ENCODE measurements at regions of chr6 and their contacts with region 1.

Region 1: GRCh38 chr6:116405138-116405537 is 34.4 kb downstream of the DSE start:
- DNase-seq: no peak
- ATAC-seq: peak; percentile 56
- H3K4me3 Mint-ChIP-seq: peak overlapping the region; percentile 67
- H3K27ac Mint-ChIP-seq: peak overlapping the region; percentile 92
- H3K4me1 Mint-ChIP-seq: peaks cover 59% of the 10 kb centered on the region
- H3K27me3 Mint-ChIP-seq: no peaks in the 10 kb centered on the region
- CTCF ChIP-seq: no peak

Region 2: GRCh38 chr6:116010790-116011401 is 394.2 kb before region 1 on chr6:
- CTCF ChIA-PET with region 1: no interaction called
- POLR2A ChIA-PET with region 1: no interaction called
- intact Hi-C with region 1: loop called (anchors 10 kb)
- DNase-seq: peak; percentile 29
- ATAC-seq: peak; percentile 64
- H3K4me3 Mint-ChIP-seq: no peak overlapping the region
- H3K27ac Mint-ChIP-seq: no peak overlapping the region
- H3K4me1 Mint-ChIP-seq: peaks cover 32% of the 10 kb centered on the region
- H3K27me3 Mint-ChIP-seq: peaks cover 2% of the 10 kb centered on the region
- CTCF ChIP-seq: peak; percentile 45

Region 3: GRCh38 chr6:116387374-116387773 is 17.8 kb before region 1 on chr6:
- CTCF ChIA-PET with region 1: no interaction called
- POLR2A ChIA-PET with region 1: interaction called, 8 read pairs
- intact Hi-C with region 1: loop called (anchors 2 kb)
- DNase-seq: no peak
- ATAC-seq: peak; percentile 53
- H3K4me3 Mint-ChIP-seq: peak overlapping the region; percentile 67
- H3K27ac Mint-ChIP-seq: peak overlapping the region; percentile 72
- H3K4me1 Mint-ChIP-seq: peaks cover 60% of the 10 kb centered on the region
- H3K27me3 Mint-ChIP-seq: no peaks in the 10 kb centered on the region
- CTCF ChIP-seq: no peak

Region 4: GRCh38 chr6:116444092-116444491 is 39.0 kb after region 1 on chr6:
- CTCF ChIA-PET with region 1: interaction called, 5 read pairs
- POLR2A ChIA-PET with region 1: interaction called, 3 read pairs
- intact Hi-C with region 1: loop called (anchors 5 kb)
- DNase-seq: no peak
- ATAC-seq: peak; percentile 78
- H3K4me3 Mint-ChIP-seq: no peak overlapping the region
- H3K27ac Mint-ChIP-seq: no peak overlapping the region
- H3K4me1 Mint-ChIP-seq: peaks cover 26% of the 10 kb centered on the region
- H3K27me3 Mint-ChIP-seq: no peaks in the 10 kb centered on the region
- CTCF ChIP-seq: no peak

Region 5: GRCh38 chr6:116476002-116476678 is 71.0 kb after region 1 on chr6:
- CTCF ChIA-PET with region 1: no interaction called
- POLR2A ChIA-PET with region 1: no interaction called
- intact Hi-C with region 1: loop called (anchors 1 kb)
- DNase-seq: no peak
- ATAC-seq: peak; percentile 97
- H3K4me3 Mint-ChIP-seq: peak overlapping the region; percentile 70
- H3K27ac Mint-ChIP-seq: peak overlapping the region; percentile 93
- H3K4me1 Mint-ChIP-seq: peaks cover 34% of the 10 kb centered on the region
- H3K27me3 Mint-ChIP-seq: no peaks in the 10 kb centered on the region
- CTCF ChIP-seq: no peak

Region 6: GRCh38 chr6:116580198-116580597 is 175.1 kb after region 1 on chr6:
- CTCF ChIA-PET with region 1: no interaction called
- POLR2A ChIA-PET with region 1: no interaction called
- intact Hi-C with region 1: no loop called
- DNase-seq: no peak
- ATAC-seq: no peak
- H3K4me3 Mint-ChIP-seq: no peak overlapping the region
- H3K27ac Mint-ChIP-seq: no peak overlapping the region
- H3K4me1 Mint-ChIP-seq: peaks cover 2% of the 10 kb centered on the region
- H3K27me3 Mint-ChIP-seq: no peaks in the 10 kb centered on the region
- CTCF ChIP-seq: no peak

Measured in activated B cell treated with CpG ODN at 0.5 μM for 24 hours (primary cell).